ENCODE measurements at regions of chr5 and their contacts with region 1.

Region 1: DNA sequence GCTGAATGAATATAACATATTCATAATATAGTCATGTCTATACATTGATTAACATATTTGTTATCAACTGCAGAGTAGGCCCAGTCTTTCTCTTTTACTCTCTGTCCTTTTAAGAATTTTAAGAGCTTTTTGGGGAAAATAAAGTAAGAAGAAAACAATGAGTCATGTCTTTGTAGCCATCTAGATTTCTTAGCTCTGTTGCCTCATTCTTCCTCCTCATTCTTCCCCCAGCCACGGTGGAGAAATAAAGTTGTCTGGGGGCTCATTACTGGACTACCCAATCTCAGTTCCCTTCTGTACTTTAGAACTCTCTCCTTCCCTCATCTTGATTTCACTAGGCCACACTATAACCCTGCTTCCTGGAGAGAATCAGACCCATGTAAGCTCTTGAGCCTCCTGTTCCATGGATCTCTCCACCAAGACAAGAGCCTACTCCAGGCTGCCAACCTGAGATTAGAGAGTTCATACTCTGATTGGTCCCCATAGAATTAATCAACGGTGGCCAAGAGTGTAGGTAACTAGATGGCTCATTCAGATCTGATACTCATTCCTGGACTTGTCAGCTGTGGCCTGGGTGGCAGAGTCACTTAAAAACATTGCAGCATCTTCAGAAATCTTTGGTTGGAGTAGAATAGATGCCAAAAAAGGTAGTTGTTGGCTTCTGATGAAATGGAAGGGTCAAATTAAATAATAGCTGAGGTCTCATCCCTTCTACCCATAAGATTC is 44.2 kb downstream of the ITGA1 start:
- DNase-seq: no peak
- H3K4me3 Mint-ChIP-seq: no peak overlapping the region
- H3K27ac Mint-ChIP-seq: no peak overlapping the region
- H3K4me1 Mint-ChIP-seq: peaks cover 5% of the 10 kb centered on the region
- H3K27me3 Mint-ChIP-seq: no peaks in the 10 kb centered on the region
- CTCF ChIP-seq: no peak

Region 2: DNA sequence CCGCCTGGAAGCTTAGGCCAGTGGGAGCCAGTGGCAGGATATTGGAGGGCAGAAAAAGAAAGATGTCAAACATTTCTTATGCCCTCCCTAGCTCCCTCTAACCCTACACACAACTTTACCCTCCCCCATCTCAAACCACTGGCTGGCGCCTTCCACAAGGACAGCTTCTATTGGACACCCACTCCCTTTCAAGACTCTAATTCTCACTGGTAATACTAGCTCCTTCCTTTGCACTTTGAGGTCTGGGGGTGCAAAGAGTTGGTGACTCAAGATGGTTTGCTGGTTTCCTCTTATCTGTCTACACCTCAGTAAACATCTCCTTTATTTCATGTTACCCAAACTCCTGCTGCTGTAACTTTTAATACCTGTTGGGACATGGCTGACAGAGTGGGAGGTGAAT is 55.8 kb before region 1 on chr5:
- CTCF ChIA-PET with region 1: no interaction called
- POLR2A ChIA-PET with region 1: no interaction called
- intact Hi-C with region 1: no loop called
- DNase-seq: no peak
- H3K4me3 Mint-ChIP-seq: no peak overlapping the region
- H3K27ac Mint-ChIP-seq: no peak overlapping the region
- H3K4me1 Mint-ChIP-seq: no peaks in the 10 kb centered on the region
- H3K27me3 Mint-ChIP-seq: peaks cover 26% of the 10 kb centered on the region
- CTCF ChIP-seq: no peak

Region 3: GRCh38 chr5:52842111-52842510 is 10.2 kb after region 1 on chr5:
- CTCF ChIA-PET with region 1: interaction called, 11 read pairs
- POLR2A ChIA-PET with region 1: interaction called, 4 read pairs
- intact Hi-C with region 1: no loop called
- DNase-seq: no peak
- H3K4me3 Mint-ChIP-seq: no peak overlapping the region
- H3K27ac Mint-ChIP-seq: no peak overlapping the region
- H3K4me1 Mint-ChIP-seq: peaks cover 22% of the 10 kb centered on the region
- H3K27me3 Mint-ChIP-seq: no peaks in the 10 kb centered on the region
- CTCF ChIP-seq: no peak

Measured in MCF 10A (cell line).